ENCODE measurements at regions of chr14 and their contacts with region 1.

Region 1: DNA sequence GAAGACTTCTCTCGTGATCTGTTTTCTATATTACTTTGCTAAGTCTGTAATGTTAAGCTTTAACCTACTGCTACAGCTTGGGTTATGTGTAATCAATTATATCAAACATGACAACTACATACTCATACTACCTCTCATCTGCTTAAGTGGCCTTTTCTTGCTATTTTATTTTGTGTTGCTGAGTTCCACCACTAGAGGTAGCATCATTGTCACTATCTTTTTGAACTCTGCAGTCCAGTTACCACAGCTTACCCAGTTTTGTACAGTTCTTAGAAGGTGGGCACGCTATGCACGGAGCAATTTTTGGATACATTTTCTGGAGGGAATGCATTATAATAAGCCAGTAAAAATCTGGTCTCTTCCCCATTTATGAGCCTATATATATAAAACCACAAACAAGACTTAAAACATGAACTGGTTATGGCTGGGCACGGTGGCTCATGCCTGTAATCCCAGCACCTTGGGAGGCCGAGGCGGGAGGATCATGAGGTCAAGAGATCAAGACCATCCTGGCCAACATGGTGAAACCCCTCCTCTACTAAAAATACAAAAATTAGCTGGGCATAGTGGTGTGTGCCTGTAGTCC is 48.5 kb downstream of the SAV1 start:
- DNase-seq: no peak
- H3K4me3 ChIP-seq: no peak overlapping the region
- H3K27ac ChIP-seq: no peak overlapping the region
- H3K4me1 ChIP-seq: no peaks in the 10 kb centered on the region
- H3K27me3 ChIP-seq: no peaks in the 10 kb centered on the region
- CTCF ChIP-seq: peak; percentile 49 to 77 (median 68)
- POLR2A ChIP-seq: no peak

Region 2: GRCh38 chr14:50714450-50715073 is 94.9 kb after region 1 on chr14:
- intact Hi-C with region 1: loop called in 1 of 2 experiments (anchors 10 kb)
- DNase-seq: peak in 2 of 7 donors; percentile 33 to 44
- H3K4me3 ChIP-seq: no peak overlapping the region
- H3K27ac ChIP-seq: no peak overlapping the region
- H3K4me1 ChIP-seq: no peaks in the 10 kb centered on the region
- H3K27me3 ChIP-seq: no peaks in the 10 kb centered on the region
- CTCF ChIP-seq: peak in 5 of 6 experiments; percentile 38 to 58 (median 44)
- POLR2A ChIP-seq: no peak